ENCODE measurements at regions of chr4 and their contacts with region 1.

Region 1: DNA sequence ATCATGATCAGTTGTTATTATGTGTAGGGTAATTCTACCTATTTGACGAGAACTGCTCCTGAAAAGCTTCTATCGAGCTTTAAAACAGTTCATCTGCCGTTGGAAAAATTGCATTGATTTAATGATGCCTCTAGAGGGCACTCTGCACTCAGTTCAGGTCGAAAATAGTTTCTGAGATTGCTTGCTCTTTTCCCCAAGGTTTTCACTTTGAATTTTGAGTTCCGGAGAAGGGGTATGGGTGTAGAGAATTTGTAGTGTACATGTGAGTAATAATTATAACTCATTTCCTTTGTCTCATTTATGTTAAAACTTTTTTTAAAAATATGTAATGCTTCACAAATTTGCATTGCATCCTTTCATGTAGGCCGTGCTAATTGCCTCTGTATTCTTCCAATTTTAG is 28.4 kb upstream of the TNIP3 start:
- DNase-seq: peak; percentile 37
- H3K4me3 Mint-ChIP-seq: peak overlapping the region; percentile 9
- H3K27ac Mint-ChIP-seq: no peak overlapping the region
- H3K4me1 Mint-ChIP-seq: peaks cover 44% of the 10 kb centered on the region
- H3K27me3 Mint-ChIP-seq: no peaks in the 10 kb centered on the region

Region 2: GRCh38 chr4:120156120-120156718 is 1036.3 kb before region 1 on chr4:
- CTCF ChIA-PET with region 1: no interaction called
- intact Hi-C with region 1: loop called (anchors 2 kb)
- DNase-seq: peak; percentile 32
- H3K4me3 Mint-ChIP-seq: no peak overlapping the region
- H3K27ac Mint-ChIP-seq: no peak overlapping the region
- H3K4me1 Mint-ChIP-seq: no peaks in the 10 kb centered on the region
- H3K27me3 Mint-ChIP-seq: no peaks in the 10 kb centered on the region

Region 3: DNA sequence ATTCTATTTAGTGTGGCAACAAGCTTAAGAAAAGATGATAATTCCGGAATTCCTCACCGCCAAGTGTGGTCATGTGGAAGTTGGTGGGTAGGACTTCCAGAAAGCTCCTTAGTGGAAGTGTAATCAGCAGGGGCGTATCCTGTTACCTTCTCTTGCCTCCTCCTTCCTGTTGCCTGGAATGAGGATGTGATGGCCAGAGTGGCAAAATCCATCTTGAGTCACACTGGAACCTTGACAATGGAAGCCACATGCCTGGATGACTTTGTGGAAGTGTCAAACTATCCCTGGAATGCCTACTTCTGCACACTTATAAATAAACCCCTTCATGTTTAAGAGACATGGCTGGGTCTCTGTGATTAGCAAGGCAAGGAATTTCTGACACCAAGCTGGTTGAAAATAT is 460.9 kb before region 1 on chr4:
- CTCF ChIA-PET with region 1: no interaction called
- intact Hi-C with region 1: no loop called
- DNase-seq: no peak
- H3K4me3 Mint-ChIP-seq: no peak overlapping the region
- H3K27ac Mint-ChIP-seq: no peak overlapping the region
- H3K4me1 Mint-ChIP-seq: no peaks in the 10 kb centered on the region
- H3K27me3 Mint-ChIP-seq: no peaks in the 10 kb centered on the region

Region 4: GRCh38 chr4:121139533-121140222 is 52.8 kb before region 1 on chr4:
- CTCF ChIA-PET with region 1: interaction called, 10 read pairs
- intact Hi-C with region 1: no loop called
- DNase-seq: peak; percentile 29
- H3K4me3 Mint-ChIP-seq: no peak overlapping the region
- H3K27ac Mint-ChIP-seq: peak overlapping the region; percentile 79
- H3K4me1 Mint-ChIP-seq: peaks cover 57% of the 10 kb centered on the region
- H3K27me3 Mint-ChIP-seq: no peaks in the 10 kb centered on the region

Region 5: GRCh38 chr4:121219227-121219626 is 26.7 kb after region 1 on chr4:
- CTCF ChIA-PET with region 1: interaction called, 24 read pairs
- intact Hi-C with region 1: no loop called
- DNase-seq: no peak
- H3K4me3 Mint-ChIP-seq: no peak overlapping the region
- H3K27ac Mint-ChIP-seq: no peak overlapping the region
- H3K4me1 Mint-ChIP-seq: peaks cover 37% of the 10 kb centered on the region
- H3K27me3 Mint-ChIP-seq: no peaks in the 10 kb centered on the region

Region 6: GRCh38 chr4:121252224-121252806 is 59.8 kb after region 1 on chr4:
- CTCF ChIA-PET with region 1: interaction called, 50 read pairs
- intact Hi-C with region 1: loop called (anchors 1 kb)
- DNase-seq: peak; percentile 73
- H3K4me3 Mint-ChIP-seq: no peak overlapping the region
- H3K27ac Mint-ChIP-seq: no peak overlapping the region
- H3K4me1 Mint-ChIP-seq: peaks cover 60% of the 10 kb centered on the region
- H3K27me3 Mint-ChIP-seq: no peaks in the 10 kb centered on the region

Region 7: GRCh38 chr4:121307445-121308327 is 115.2 kb after region 1 on chr4:
- CTCF ChIA-PET with region 1: interaction called, 86 read pairs
- intact Hi-C with region 1: loop called (anchors 1 kb)
- DNase-seq: peak; percentile 71
- H3K4me3 Mint-ChIP-seq: no peak overlapping the region
- H3K27ac Mint-ChIP-seq: no peak overlapping the region
- H3K4me1 Mint-ChIP-seq: peaks cover 15% of the 10 kb centered on the region
- H3K27me3 Mint-ChIP-seq: no peaks in the 10 kb centered on the region

Region 8: GRCh38 chr4:121633653-121634052 is 441.2 kb after region 1 on chr4:
- CTCF ChIA-PET with region 1: no interaction called
- intact Hi-C with region 1: no loop called
- DNase-seq: no peak
- H3K4me3 Mint-ChIP-seq: no peak overlapping the region
- H3K27ac Mint-ChIP-seq: no peak overlapping the region
- H3K4me1 Mint-ChIP-seq: no peaks in the 10 kb centered on the region
- H3K27me3 Mint-ChIP-seq: peaks cover 8% of the 10 kb centered on the region

Region 9: GRCh38 chr4:121656269-121656641 is 463.8 kb after region 1 on chr4:
- CTCF ChIA-PET with region 1: no interaction called
- intact Hi-C with region 1: loop called (anchors 5 kb)
- DNase-seq: peak; percentile 56
- H3K4me3 Mint-ChIP-seq: no peak overlapping the region
- H3K27ac Mint-ChIP-seq: no peak overlapping the region
- H3K4me1 Mint-ChIP-seq: no peaks in the 10 kb centered on the region
- H3K27me3 Mint-ChIP-seq: peaks cover 6% of the 10 kb centered on the region